ENCODE measurements at regions of chr11 and their contacts with region 1.

Region 1: GRCh38 chr11:128686745-128687177 is 7.1 kb upstream of the FLI1 start:
- DNase-seq: peak; percentile 36
- H3K4me3 ChIP-seq: peak overlapping the region in 1 of 2 donors; percentile 2
- H3K27ac ChIP-seq: no peak overlapping the region
- H3K4me1 ChIP-seq: peaks cover 8% of the 10 kb centered on the region
- H3K27me3 ChIP-seq: no peaks in the 10 kb centered on the region
- CTCF ChIP-seq: no peak
- POLR2A ChIP-seq: no peak

Region 2: DNA sequence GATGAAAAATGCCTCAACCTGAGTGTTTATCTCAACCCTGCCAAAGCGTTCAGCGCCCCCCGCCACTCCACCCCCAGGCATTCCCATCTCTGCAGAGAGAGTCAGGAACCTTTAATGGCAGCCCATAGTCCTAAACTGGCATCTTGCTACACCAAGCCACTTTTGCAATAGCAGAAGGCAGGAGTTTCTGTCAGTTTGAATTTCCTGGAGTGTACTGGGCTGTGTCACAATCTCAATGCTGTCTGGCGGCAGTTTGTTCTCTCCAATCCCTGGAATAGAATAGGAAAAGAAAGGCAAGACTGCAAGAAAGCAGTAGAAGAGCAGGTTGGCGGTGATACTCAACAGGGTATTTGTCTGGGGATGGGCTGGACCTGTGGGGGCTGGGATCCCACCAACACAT is 25.8 kb before region 1 on chr11:
- intact Hi-C with region 1: loop called (anchors 2 kb)
- DNase-seq: no peak
- H3K4me3 ChIP-seq: no peak overlapping the region
- H3K27ac ChIP-seq: no peak overlapping the region
- H3K4me1 ChIP-seq: no peaks in the 10 kb centered on the region
- H3K27me3 ChIP-seq: no peaks in the 10 kb centered on the region
- CTCF ChIP-seq: no peak
- POLR2A ChIP-seq: no peak

Measured in testis (tissue), 5 donors.